ENCODE measurements at regions of chr13 and their contacts with region 1.

Region 1: DNA sequence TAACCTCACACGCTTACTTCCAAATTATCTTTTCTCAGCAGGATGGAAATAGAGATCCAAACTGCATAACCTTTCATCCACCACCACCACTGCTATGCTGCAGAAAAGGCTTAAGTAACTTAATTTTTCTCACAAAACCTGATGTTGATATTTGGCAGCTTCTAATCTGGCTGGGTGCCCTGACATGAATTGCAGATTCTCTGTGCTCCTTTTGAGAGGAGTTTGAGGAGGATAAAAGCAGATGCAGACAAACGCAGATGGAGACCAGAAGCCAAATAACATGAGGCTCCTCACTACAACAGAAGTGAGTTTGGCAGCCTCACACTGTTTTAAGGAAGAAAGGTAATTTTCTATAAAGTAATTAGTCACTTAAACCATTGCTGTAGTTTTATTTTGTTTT is 646.2 kb upstream of the ATXN8OS start:
- DNase-seq: no peak
- ATAC-seq: no peak
- H3K4me3 ChIP-seq: no peak overlapping the region
- H3K27ac ChIP-seq: no peak overlapping the region
- H3K4me1 ChIP-seq: no peaks in the 10 kb centered on the region
- H3K27me3 ChIP-seq: no peaks in the 10 kb centered on the region
- CTCF ChIP-seq: no peak

Region 2: DNA sequence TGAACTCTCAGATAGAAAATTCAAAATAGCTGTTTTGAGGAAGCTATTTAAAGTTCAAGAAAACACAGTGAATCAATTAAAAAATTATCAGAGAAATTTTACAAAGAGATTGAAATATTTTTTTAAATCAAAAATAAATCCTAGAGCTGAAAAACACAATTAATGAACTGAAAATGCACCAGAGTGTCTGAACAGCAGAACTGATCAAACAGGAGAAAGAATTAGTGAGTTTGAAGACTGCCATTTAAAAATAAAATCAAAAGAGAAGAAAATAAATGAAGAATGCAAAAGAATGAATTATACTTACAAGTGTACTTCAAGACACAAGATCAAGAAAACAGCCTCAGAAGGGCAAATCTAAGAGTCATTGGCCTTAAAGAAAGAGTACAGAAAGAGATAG is 354.0 kb before region 1 on chr13:
- CTCF ChIA-PET with region 1: no interaction called
- POLR2A ChIA-PET with region 1: interaction called, 12 read pairs
- in situ Hi-C with region 1: no loop called
- intact Hi-C with region 1: no loop called
- DNase-seq: no peak
- ATAC-seq: no peak
- H3K4me3 ChIP-seq: no peak overlapping the region
- H3K27ac ChIP-seq: no peak overlapping the region
- H3K4me1 ChIP-seq: no peaks in the 10 kb centered on the region
- H3K27me3 ChIP-seq: no peaks in the 10 kb centered on the region
- CTCF ChIP-seq: no peak

Region 3: DNA sequence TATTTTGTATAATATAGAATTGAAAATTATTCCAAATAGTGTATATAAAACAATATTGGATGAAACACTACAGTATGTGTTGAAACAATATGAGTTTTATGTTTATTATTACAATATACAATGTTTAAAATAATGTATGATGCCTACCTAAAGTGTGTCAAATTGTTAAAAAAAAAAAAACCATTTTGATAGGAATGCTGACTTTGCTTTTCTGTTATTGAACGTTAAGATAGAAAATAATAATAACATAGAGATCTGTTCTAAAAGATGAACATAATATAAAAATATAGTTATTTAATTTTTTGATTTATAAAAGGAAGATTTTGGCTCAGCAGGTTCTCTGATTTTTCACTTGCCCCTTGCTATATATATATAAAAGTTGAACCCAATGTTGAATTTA is 171.6 kb after region 1 on chr13:
- CTCF ChIA-PET with region 1: no interaction called
- POLR2A ChIA-PET with region 1: no interaction called
- in situ Hi-C with region 1: no loop called
- intact Hi-C with region 1: no loop called
- DNase-seq: no peak
- ATAC-seq: no peak
- H3K4me3 ChIP-seq: no peak overlapping the region
- H3K27ac ChIP-seq: no peak overlapping the region
- H3K4me1 ChIP-seq: no peaks in the 10 kb centered on the region
- H3K27me3 ChIP-seq: no peaks in the 10 kb centered on the region
- CTCF ChIP-seq: no peak

Region 4: DNA sequence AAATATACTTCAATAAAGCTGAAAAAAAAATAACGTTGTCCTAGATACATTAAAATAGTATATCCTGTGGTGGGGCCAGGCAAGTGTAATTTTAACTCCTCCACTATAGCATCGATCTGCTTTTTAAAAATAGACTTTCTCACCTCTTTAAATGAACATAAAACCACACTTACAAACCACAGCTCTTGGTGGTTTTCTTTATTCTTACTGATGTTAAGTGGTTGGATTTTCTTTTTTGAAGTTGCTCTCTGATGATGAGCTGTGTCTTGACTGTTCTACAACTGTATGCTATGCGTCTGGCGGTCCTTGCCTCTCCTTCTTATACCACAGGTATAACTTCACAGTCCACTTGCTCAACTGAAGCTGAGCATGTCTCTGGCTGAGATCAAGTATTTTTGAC is 1368.4 kb after region 1 on chr13:
- CTCF ChIA-PET with region 1: no interaction called
- POLR2A ChIA-PET with region 1: no interaction called
- in situ Hi-C with region 1: no loop called
- intact Hi-C with region 1: no loop called
- DNase-seq: no peak
- ATAC-seq: no peak
- H3K4me3 ChIP-seq: no peak overlapping the region
- H3K27ac ChIP-seq: no peak overlapping the region
- H3K4me1 ChIP-seq: no peaks in the 10 kb centered on the region
- H3K27me3 ChIP-seq: no peaks in the 10 kb centered on the region
- CTCF ChIP-seq: no peak

Measured in Panc1 (cell line).